Heart right ventricle (tissue), 16 donors: ENCODE measurements at regions of chr1 and their contacts with region 1.

Region 1: GRCh38 chr1:4430406-4431365 is 223.7 kb upstream of the AJAP1 start:
- DNase-seq: no peak
- ATAC-seq: peak in 5 of 8 donors; percentile 30 to 88 (median 49)
- H3K4me3 ChIP-seq: no peak overlapping the region
- H3K27ac ChIP-seq: no peak overlapping the region
- H3K4me1 ChIP-seq: no peaks in the 10 kb centered on the region
- H3K27me3 ChIP-seq: no peaks in the 10 kb centered on the region
- CTCF ChIP-seq: no peak

Region 2: DNA sequence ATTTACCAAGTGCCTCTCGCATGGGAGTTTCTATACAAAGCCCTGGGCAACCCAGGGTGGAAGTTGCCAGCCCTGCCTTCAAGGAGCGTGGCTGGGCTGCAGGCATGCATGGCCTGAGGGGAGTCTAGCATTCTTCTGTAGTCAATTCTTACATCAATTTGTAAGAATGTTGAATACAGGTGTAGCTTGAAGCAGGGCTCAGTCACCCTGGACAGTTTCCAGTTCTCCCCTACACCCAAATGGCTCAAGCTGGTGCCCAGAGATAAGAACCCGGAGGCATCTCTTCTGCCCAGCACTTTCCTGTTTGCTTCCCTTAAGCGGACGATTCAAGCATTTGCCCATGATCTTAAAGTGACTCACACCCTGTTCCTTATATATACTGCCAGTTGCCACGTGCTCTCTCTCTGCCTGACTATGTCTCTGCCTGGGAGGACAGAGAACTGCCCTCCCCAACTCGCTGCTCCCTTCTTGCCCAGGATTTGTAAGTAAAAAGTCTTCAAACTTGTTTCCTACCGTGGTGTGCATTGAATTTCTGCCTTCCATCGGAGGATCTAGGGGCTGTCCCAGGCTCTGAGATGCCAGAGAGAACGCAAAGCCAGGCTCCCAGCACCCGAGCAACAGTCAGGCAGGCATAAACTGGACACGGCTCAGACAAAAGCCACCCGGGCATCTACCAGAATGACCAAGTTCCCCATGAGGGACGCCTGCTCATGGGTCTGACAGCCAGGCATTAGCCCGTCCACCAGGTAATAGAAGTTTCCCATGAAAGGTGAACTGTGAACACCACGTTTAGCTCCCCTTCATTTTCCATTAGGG is 172.8 kb after region 1 on chr1:
- intact Hi-C with region 1: no loop called
- DNase-seq: no peak
- ATAC-seq: peak in 1 of 8 donors; percentile 48
- H3K4me3 ChIP-seq: no peak overlapping the region
- H3K27ac ChIP-seq: no peak overlapping the region
- H3K4me1 ChIP-seq: peaks cover 0 to 7% (median 0%) of the 10 kb centered on the region in 9 donors
- H3K27me3 ChIP-seq: peaks cover 0 to 89% (median 46%) of the 10 kb centered on the region in 7 donors
- CTCF ChIP-seq: no peak

Region 3: DNA sequence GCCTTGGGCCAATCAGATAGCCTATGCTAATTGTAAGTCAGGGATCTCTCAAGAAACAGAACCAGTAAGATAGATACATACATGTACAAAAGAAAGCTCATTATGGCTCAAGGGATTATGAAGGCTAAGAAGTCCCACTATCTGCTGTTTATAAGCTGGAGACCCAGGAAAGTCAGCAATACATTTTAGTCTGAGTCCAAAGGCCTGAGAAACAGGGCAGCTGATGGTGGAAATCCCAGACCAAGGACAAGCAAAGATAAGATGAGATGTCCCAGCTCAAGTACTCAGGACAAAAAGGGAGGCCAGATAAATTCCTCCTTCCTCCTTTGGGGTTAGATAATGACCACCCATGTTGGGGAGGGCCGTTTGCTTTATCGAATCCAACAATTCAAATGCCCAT is 493.7 kb after region 1 on chr1:
- intact Hi-C with region 1: loop called in 1 of 10 experiments (anchors 10 kb)
- DNase-seq: no peak
- ATAC-seq: no peak
- H3K4me3 ChIP-seq: no peak overlapping the region
- H3K27ac ChIP-seq: no peak overlapping the region
- H3K4me1 ChIP-seq: no peaks in the 10 kb centered on the region
- H3K27me3 ChIP-seq: peaks cover 0 to 10% (median 3%) of the 10 kb centered on the region in 7 donors
- CTCF ChIP-seq: no peak